Activated T-helper 1 cell treated with anti-CD3 and anti-CD28 coated beads, Interleukin-12 subunit alpha, Interleukin-12 subunit beta, Interleukin-2, Interleukin-4 antibody, amounts not matched to agents 30 ng/mL and 10 ng/mL and 1 ng/mL, durations not matched to agents 14 hours and 24 hours and 36 hours (primary cell): ENCODE measurements at regions of chr13 and their contacts with region 1.

Region 1: GRCh38 chr13:72643311-72643989 is 84.0 kb downstream of the MZT1 start:
- DNase-seq: peak; percentile 8
- H3K4me3 Mint-ChIP-seq: no peak overlapping the region
- H3K27ac Mint-ChIP-seq: no peak overlapping the region
- H3K4me1 Mint-ChIP-seq: no peaks in the 10 kb centered on the region
- H3K27me3 Mint-ChIP-seq: no peaks in the 10 kb centered on the region

Region 2: GRCh38 chr13:72716776-72717175 is 73.3 kb after region 1 on chr13:
- intact Hi-C with region 1: loop called (anchors 5 kb)
- DNase-seq: no peak
- H3K4me3 Mint-ChIP-seq: no peak overlapping the region
- H3K27ac Mint-ChIP-seq: no peak overlapping the region
- H3K4me1 Mint-ChIP-seq: peaks cover 20% of the 10 kb centered on the region
- H3K27me3 Mint-ChIP-seq: no peaks in the 10 kb centered on the region

Region 3: DNA sequence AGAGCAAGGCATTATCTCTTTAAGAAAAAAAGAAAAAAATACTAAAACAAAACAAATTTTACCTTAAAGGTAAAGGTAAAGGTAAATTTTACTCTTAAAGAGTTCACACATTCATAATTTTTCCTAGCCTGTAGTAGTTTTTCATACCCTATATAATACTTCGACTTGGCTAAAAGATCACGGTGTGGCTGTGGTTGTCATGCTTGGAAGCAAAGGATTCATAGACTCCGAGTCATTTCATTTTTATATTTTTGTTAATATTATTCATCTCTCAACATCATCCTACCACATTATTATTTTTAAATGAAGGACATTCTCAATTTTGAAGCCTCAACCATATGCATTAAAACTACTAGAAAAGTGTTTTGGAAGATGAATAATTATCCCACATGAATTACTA is 191.2 kb after region 1 on chr13:
- intact Hi-C with region 1: no loop called
- DNase-seq: no peak
- H3K4me3 Mint-ChIP-seq: no peak overlapping the region
- H3K27ac Mint-ChIP-seq: no peak overlapping the region
- H3K4me1 Mint-ChIP-seq: peaks cover 16% of the 10 kb centered on the region
- H3K27me3 Mint-ChIP-seq: no peaks in the 10 kb centered on the region